Stomach (tissue), 19 donors: ENCODE measurements at regions of chr17 and their contacts with region 1.

Region 1: GRCh38 chr17:50200457-50201275 is 765 bp downstream of the COL1A1 start:
- DNase-seq: peak; percentile 94 to 96
- H3K4me3 ChIP-seq: peak overlapping the region; percentile 49 to 61 (median 56)
- H3K27ac ChIP-seq: peak overlapping the region; percentile 71 to 93 (median 90)
- H3K4me1 ChIP-seq: peaks cover 23 to 79% (median 55%) of the 10 kb centered on the region in 4 donors
- H3K27me3 ChIP-seq: peaks cover 0 to 58% (median 14%) of the 10 kb centered on the region in 3 donors
- CTCF ChIP-seq: peak in 6 of 7 experiments; percentile 36 to 100 (median 100)
- EP300 ChIP-seq: no peak
- POLR2A ChIP-seq: no peak

Region 2: DNA sequence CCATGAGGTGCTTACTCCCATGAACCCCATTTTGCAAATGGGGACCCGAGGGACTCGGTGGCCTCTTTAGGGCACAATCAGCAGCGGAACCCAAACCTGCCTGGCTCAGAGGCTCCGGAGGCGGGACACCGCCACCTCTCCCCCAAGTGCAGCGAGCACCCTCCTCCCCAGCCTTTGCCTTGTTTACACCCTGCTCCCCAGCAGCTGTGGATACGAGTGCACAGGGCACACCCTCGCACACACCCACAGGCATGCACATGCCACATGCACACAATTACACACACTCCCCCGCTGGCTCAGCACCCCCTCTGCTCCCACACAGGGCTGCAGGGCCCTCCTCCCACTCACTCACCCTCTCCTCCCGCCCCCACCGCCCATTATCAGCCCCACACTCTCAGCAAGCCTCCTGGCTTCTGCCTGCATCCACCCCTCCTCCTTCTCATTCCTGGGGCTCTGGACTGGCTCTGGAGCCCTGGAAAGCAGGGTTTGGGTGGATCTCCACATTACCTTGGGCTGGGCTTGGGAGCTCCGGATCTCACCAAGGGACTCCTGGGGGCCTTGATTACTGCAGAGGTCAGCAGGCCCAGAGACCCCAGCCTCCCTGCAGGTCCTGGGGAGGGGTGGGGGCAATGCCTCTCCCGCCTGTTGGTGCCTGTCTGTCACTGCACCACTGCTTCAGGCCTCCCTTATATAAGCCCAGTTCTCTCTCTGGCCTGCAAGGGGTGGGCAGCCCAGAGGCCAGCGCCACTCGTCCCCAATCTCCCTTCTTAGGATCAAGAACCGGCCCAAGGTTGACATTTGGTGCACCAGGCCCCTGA is 99.1 kb before region 1 on chr17:
- intact Hi-C with region 1: no loop called
- DNase-seq: peak; percentile 73 to 93
- H3K4me3 ChIP-seq: peak overlapping the region; percentile 2 to 20 (median 10)
- H3K27ac ChIP-seq: peak overlapping the region; percentile 71 to 85 (median 80)
- H3K4me1 ChIP-seq: peaks cover 36 to 79% (median 55%) of the 10 kb centered on the region in 4 donors
- H3K27me3 ChIP-seq: no peaks in the 10 kb centered on the region
- CTCF ChIP-seq: no peak
- EP300 ChIP-seq: no peak
- POLR2A ChIP-seq: no peak

Region 3: GRCh38 chr17:50269477-50270434 is 69.1 kb after region 1 on chr17:
- intact Hi-C with region 1: loop called (anchors 5 kb)
- DNase-seq: peak; percentile 76 to 90
- H3K4me3 ChIP-seq: no peak overlapping the region
- H3K27ac ChIP-seq: peak overlapping the region; percentile 2 to 86 (median 59)
- H3K4me1 ChIP-seq: peaks cover 32 to 87% (median 69%) of the 10 kb centered on the region in 4 donors
- H3K27me3 ChIP-seq: peaks cover 0 to 19% (median 5%) of the 10 kb centered on the region in 3 donors
- CTCF ChIP-seq: peak in 5 of 7 experiments; percentile 65 to 80 (median 77)
- EP300 ChIP-seq: no peak
- POLR2A ChIP-seq: no peak

Region 4: GRCh38 chr17:50297407-50297865 is 96.8 kb after region 1 on chr17:
- intact Hi-C with region 1: loop called (anchors 5 kb)
- DNase-seq: peak; percentile 89
- H3K4me3 ChIP-seq: no peak overlapping the region
- H3K27ac ChIP-seq: peak overlapping the region in 3 of 5 donors; percentile 19 to 43 (median 42)
- H3K4me1 ChIP-seq: peaks cover 0 to 32% (median 12%) of the 10 kb centered on the region in 4 donors
- H3K27me3 ChIP-seq: no peaks in the 10 kb centered on the region
- CTCF ChIP-seq: peak in 5 of 7 experiments; percentile 86 to 98 (median 94)
- EP300 ChIP-seq: no peak
- POLR2A ChIP-seq: no peak